Calu3 (cell line): ENCODE measurements at regions of chr3 and their contacts with region 1.

Region 1: DNA sequence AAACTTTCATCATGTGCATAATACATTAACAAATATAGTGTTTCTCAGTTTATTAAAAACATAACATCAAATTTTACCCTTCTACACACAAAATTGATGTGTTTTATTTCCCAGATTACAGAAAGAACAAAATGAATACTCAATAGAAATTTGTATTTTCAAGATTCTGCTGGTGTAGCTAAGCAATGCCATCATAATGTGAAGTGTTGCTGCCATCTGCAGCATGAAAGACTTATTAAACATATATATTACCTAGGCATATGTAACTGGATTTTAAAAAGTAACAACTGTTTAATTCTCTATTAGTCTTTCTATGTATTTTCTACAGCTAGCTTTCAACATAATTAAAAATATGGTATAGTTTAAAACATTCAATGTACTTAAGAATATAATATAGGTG is 27.5 kb downstream of the PLSCR5 start:
- DNase-seq: peak; percentile 49
- H3K4me3 Mint-ChIP-seq: no peak overlapping the region
- H3K27ac Mint-ChIP-seq: peak overlapping the region; percentile 47
- H3K4me1 Mint-ChIP-seq: peaks cover 51% of the 10 kb centered on the region
- H3K27me3 Mint-ChIP-seq: no peaks in the 10 kb centered on the region
- CTCF ChIP-seq: peak; percentile 57

Region 2: GRCh38 chr3:146189519-146190173 is 388.0 kb before region 1 on chr3:
- CTCF ChIA-PET with region 1: interaction called, 14 read pairs
- intact Hi-C with region 1: loop called (anchors 1 kb)
- DNase-seq: peak; percentile 57
- H3K4me3 Mint-ChIP-seq: peak overlapping the region; percentile 26
- H3K27ac Mint-ChIP-seq: peak overlapping the region; percentile 66
- H3K4me1 Mint-ChIP-seq: peaks cover 14% of the 10 kb centered on the region
- H3K27me3 Mint-ChIP-seq: no peaks in the 10 kb centered on the region
- CTCF ChIP-seq: peak; percentile 81

Region 3: DNA sequence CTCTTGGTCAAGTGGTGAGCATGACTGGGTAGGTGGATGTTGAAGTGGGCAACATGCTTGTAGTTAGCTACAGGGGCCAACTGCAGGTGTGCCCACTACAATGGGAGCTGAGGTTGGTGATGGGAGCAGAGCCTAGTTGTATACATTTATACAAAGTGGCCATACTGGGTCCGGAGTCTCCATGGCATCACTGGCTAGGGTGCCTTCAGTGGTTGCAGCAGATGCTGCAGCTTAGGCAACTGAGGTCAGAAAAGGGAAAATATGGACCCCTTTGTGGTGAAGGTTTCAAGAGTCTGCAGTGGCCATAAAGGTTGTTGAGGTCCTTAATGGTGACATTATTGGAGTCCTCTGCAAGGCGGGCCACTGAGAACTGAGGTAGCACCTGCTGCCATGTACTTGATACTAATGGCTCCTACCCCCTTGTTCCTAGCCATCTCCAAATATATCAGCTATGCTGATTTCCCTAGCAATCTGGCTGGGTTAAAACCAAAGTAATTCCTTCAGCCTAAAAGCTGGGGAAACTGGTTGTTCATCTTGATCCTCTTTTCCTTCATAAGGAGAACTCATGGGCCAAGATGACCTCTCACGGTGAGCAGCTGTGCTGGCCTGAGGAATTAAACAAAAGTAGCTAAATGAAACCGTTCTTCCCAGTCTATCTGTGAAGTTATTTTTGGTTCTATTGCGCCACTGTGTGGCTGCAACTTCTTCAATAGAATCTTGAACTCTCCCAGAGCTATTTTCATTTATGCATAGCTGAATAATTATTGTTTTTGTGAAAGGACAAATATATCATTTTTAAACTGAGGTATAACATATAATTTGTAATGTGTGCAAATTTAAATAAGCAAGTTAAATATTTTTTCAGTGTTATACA is 250.8 kb before region 1 on chr3:
- CTCF ChIA-PET with region 1: interaction called, 19 read pairs
- intact Hi-C with region 1: no loop called
- DNase-seq: peak; percentile 55
- H3K4me3 Mint-ChIP-seq: no peak overlapping the region
- H3K27ac Mint-ChIP-seq: no peak overlapping the region
- H3K4me1 Mint-ChIP-seq: no peaks in the 10 kb centered on the region
- H3K27me3 Mint-ChIP-seq: no peaks in the 10 kb centered on the region
- CTCF ChIP-seq: peak; percentile 60

Region 4: GRCh38 chr3:146382386-146382785 is 195.3 kb before region 1 on chr3:
- CTCF ChIA-PET with region 1: no interaction called
- intact Hi-C with region 1: loop called (anchors 2 kb)
- DNase-seq: peak; percentile 53
- H3K4me3 Mint-ChIP-seq: no peak overlapping the region
- H3K27ac Mint-ChIP-seq: no peak overlapping the region
- H3K4me1 Mint-ChIP-seq: peaks cover 18% of the 10 kb centered on the region
- H3K27me3 Mint-ChIP-seq: no peaks in the 10 kb centered on the region
- CTCF ChIP-seq: no peak

Region 5: GRCh38 chr3:146544002-146544928 is 33.4 kb before region 1 on chr3 and contains the start of gene PLSCR1:
- CTCF ChIA-PET with region 1: interaction called, 6 read pairs
- intact Hi-C with region 1: loop called (anchors 2 kb)
- DNase-seq: peak; percentile 99
- H3K4me3 Mint-ChIP-seq: peak within 1 kb of the TSS; percentile 87
- H3K27ac Mint-ChIP-seq: peak within 1 kb of the TSS; percentile 91
- H3K4me1 Mint-ChIP-seq: peaks cover 51% of the 10 kb centered on the region
- H3K27me3 Mint-ChIP-seq: no peaks in the 10 kb centered on the region
- CTCF ChIP-seq: no peak
- total RNA-seq, gene PLSCR1: 887 and 1,018 TPM in 2 replicates